Ovary (tissue), 10 donors: ENCODE measurements at regions of chr18 and their contacts with region 1.

Region 1: DNA sequence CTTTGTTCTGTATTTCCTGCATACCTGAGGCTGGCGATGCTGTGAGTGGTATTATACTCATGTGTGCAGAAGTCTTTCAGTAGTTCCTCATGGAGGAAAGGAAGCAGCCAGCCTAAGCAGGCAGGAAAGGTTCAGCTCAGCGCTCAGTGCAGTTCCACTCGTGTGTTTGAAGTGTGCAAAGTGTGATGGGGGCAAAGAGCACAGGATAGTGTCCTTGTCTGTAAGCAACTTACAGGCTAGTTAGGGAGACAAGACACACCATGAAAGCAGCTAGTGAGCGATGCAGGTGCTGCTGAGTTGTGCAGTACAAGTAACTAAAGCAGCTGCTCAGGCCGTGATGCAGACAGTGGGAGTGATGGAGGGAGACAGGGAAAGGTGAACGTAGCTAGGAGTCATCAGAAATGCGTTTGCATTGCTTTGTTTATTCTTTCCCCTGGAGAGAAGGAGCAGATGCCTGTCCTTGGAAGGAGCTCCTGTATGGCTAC is 146.2 kb downstream of the LDLRAD4 start:
- DNase-seq: no peak
- H3K4me3 ChIP-seq: no peak overlapping the region
- H3K27ac ChIP-seq: no peak overlapping the region
- H3K4me1 ChIP-seq: no peaks in the 10 kb centered on the region
- H3K27me3 ChIP-seq: no peaks in the 10 kb centered on the region
- CTCF ChIP-seq: no peak
- EP300 ChIP-seq: no peak
- POLR2A ChIP-seq: no peak

Region 2: DNA sequence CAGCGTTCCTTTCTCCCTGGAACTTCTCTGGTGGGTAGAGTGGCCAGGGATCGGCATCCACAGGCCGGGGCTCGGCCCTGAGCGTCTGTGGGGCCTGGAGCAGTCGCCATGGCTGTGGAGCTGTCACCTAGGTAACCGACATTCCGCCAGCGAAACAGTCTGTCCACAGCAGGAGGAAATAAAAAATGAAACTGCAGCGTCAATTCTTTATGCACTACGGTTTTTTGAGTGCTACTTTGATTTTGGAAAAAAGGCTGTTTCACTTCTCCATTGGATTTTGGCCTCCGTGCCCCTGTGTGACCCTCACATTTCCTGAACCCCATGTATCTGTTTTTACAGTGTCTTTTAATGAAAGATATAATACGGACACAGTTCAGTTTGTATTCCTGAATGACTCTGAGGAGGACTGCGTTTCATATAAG is 17.2 kb after region 1 on chr18:
- intact Hi-C with region 1: loop called in 1 of 4 experiments (anchors 2 kb)
- DNase-seq: peak; percentile 18 to 63 (median 46)
- H3K4me3 ChIP-seq: peak overlapping the region; percentile 20
- H3K27ac ChIP-seq: no peak overlapping the region
- H3K4me1 ChIP-seq: peaks cover 6% of the 10 kb centered on the region
- H3K27me3 ChIP-seq: no peaks in the 10 kb centered on the region
- CTCF ChIP-seq: no peak
- EP300 ChIP-seq: no peak
- POLR2A ChIP-seq: no peak

Region 3: GRCh38 chr18:13585379-13586153 is 220.8 kb after region 1 on chr18:
- intact Hi-C with region 1: no loop called
- DNase-seq: no peak
- H3K4me3 ChIP-seq: no peak overlapping the region
- H3K27ac ChIP-seq: no peak overlapping the region
- H3K4me1 ChIP-seq: no peaks in the 10 kb centered on the region
- H3K27me3 ChIP-seq: no peaks in the 10 kb centered on the region
- CTCF ChIP-seq: no peak
- EP300 ChIP-seq: no peak
- POLR2A ChIP-seq: no peak